ENCODE measurements at regions of chr4 and their contacts with region 1.

Region 1: GRCh38 chr4:108620101-108620932 is at the start of gene RPL34:
- DNase-seq: peak; percentile 97
- H3K4me3 Mint-ChIP-seq: peak within 1 kb of the TSS; percentile 88
- H3K27ac Mint-ChIP-seq: peak within 1 kb of the TSS; percentile 95
- H3K4me1 Mint-ChIP-seq: peaks cover 48% of the 10 kb centered on the region
- H3K27me3 Mint-ChIP-seq: no peaks in the 10 kb centered on the region
- total RNA-seq, gene RPL34: 1,653 to 1,658 TPM

Region 2: DNA sequence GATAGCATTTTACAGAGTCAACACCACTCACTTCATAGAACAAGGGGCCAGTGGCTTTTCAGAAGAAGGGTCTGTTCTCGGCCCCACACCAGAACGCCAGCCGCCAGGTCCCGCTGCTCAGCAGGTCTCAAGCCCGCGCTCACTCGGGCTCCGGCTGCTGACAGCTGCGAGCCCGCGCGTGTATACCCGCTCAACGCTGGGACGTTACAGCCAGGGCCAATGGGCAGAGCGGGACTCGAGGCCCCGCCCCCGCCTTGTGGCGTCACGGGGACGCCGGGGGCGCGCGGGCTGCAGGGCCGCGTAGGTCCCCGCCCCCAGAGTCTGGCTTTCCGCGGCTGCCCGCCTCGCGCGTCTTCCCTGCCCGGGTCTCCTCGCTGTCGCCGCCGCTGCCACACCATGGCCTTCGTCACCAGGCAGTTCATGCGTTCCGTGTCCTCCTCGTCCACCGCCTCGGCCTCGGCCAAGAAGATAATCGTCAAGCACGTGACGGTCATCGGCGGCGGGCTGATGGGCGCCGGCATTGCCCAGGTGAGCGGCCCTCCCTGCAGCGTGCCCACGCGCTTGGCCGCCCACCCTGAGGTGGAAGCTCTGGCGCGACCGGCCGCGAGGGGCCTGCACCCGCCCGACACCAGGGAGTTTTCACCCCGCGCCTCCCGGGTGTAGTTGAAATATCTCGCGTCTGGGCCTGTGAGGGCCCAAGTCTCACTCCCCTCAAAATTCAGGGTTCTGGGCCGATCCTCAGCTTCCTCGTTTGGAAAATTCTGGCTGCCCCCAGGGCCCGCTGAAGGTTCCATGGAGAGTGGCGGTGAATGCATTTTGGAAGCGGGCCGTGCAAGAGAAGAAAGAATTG is 630.6 kb before region 1 on chr4 and contains the start of gene HADH:
- CTCF ChIA-PET with region 1: no interaction called
- POLR2A ChIA-PET with region 1: interaction called, 4 read pairs
- intact Hi-C with region 1: loop called (anchors 1 kb)
- DNase-seq: peak; percentile 95
- H3K4me3 Mint-ChIP-seq: peak within 1 kb of the TSS; percentile 85
- H3K27ac Mint-ChIP-seq: peak within 1 kb of the TSS; percentile 76
- H3K4me1 Mint-ChIP-seq: peaks cover 36% of the 10 kb centered on the region
- H3K27me3 Mint-ChIP-seq: no peaks in the 10 kb centered on the region
- total RNA-seq, gene HADH: 49.0 to 50.6 TPM

Region 3: GRCh38 chr4:108166441-108167315 is 453.6 kb before region 1 on chr4:
- CTCF ChIA-PET with region 1: no interaction called
- POLR2A ChIA-PET with region 1: interaction called, 4 read pairs
- intact Hi-C with region 1: loop called (anchors 1 kb)
- DNase-seq: peak; percentile 81
- H3K4me3 Mint-ChIP-seq: peak overlapping the region; percentile 85
- H3K27ac Mint-ChIP-seq: peak overlapping the region; percentile 94
- H3K4me1 Mint-ChIP-seq: peaks cover 46% of the 10 kb centered on the region
- H3K27me3 Mint-ChIP-seq: peaks cover 9% of the 10 kb centered on the region

Region 4: DNA sequence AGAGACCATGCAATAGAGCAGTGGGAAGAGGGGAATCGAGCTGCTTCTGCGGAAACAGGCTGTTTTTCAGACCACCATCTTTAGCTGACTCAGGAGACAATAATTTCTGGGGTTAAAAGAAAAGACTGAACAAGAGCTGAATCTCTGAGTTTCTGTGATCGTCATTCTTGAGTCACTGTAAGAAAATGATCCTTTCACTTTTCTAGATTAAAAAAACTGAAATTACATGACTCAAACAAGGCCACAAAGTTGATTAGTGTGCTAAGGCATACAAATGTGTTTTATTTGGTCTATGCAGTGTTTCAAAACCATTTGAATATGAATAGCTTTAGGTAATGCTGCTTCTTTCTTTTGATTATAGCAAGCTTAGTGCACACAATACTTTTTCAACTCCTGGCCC is 194.3 kb before region 1 on chr4:
- CTCF ChIA-PET with region 1: no interaction called
- POLR2A ChIA-PET with region 1: no interaction called
- intact Hi-C with region 1: loop called (anchors 5 kb)
- DNase-seq: no peak
- H3K4me3 Mint-ChIP-seq: no peak overlapping the region
- H3K27ac Mint-ChIP-seq: no peak overlapping the region
- H3K4me1 Mint-ChIP-seq: peaks cover 22% of the 10 kb centered on the region
- H3K27me3 Mint-ChIP-seq: peaks cover 12% of the 10 kb centered on the region

Region 5: DNA sequence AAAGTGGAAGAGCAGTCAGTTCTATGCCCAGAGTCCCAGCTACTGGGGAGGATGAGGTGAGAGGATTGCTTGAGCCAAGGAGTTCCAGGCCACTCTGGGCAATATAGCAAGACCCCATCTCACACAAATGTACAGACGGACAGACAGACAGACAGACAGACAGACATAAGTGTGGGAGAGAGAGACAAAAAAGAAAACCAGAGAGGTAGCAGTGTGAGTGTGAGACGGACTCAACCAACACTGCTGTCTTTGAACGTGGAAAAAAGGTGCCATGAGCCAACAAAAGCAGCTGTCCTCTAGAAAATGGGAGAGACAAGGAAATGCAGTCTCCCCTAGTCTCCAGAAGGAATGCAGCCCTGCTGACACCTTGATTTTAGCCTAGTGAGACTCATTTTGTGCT is 18.2 kb before region 1 on chr4:
- CTCF ChIA-PET with region 1: interaction called, 3 read pairs
- POLR2A ChIA-PET with region 1: no interaction called
- intact Hi-C with region 1: loop called (anchors 2 kb)
- DNase-seq: no peak
- H3K4me3 Mint-ChIP-seq: no peak overlapping the region
- H3K27ac Mint-ChIP-seq: no peak overlapping the region
- H3K4me1 Mint-ChIP-seq: peaks cover 16% of the 10 kb centered on the region
- H3K27me3 Mint-ChIP-seq: no peaks in the 10 kb centered on the region

Region 6: DNA sequence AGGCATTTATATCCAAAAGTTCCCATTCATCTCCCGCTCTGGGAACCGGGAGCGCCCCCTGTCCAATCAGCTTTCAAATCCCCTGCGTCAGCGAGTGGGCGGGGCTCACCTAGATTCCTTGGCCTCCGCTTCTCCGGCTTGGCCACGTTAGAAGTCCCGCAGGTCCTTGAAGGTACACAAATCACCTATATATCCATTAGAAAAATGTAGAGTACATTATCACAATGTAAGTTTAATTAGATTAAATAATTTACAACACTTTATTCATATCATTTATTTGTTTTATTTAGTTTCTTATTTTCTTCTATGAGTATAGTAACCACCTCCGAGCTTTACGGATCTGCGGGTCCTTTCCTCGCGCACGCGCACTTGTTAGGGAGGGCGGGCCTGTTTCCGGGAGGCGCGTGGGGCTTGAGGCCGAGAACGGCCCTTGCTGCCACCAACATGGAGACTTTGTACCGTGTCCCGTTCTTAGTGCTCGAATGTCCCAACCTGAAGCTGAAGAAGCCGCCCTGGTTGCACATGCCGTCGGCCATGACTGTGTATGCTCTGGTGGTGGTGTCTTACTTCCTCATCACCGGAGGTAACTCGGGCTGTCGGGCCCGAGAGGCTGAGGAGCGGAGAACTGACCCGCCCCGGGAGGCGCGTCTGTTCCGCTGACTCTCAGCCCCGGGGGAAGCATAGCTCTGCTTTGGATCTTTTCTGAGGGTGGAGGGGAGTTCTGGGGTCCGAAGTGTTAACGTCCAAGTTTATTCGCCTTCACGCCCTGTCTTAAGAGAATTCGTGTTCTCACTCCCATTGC is 30.1 kb after region 1 on chr4 and contains the start of gene OSTC:
- CTCF ChIA-PET with region 1: interaction called, 3 read pairs
- POLR2A ChIA-PET with region 1: interaction called, 23 read pairs
- intact Hi-C with region 1: loop called (anchors 1 kb)
- DNase-seq: peak; percentile 94
- H3K4me3 Mint-ChIP-seq: peak within 1 kb of the TSS; percentile 96
- H3K27ac Mint-ChIP-seq: peak within 1 kb of the TSS; percentile 91
- H3K4me1 Mint-ChIP-seq: peaks cover 34% of the 10 kb centered on the region
- H3K27me3 Mint-ChIP-seq: no peaks in the 10 kb centered on the region
- total RNA-seq, gene OSTC: 74.3 to 76.6 TPM

Measured in activated CD4-positive, alpha-beta memory T cell treated with anti-CD3 and anti-CD28 coated beads for 36 hours (primary cell).